Activated CD4-positive, alpha-beta memory T cell treated with anti-CD3 and anti-CD28 coated beads for 36 hours (primary cell): ENCODE measurements at regions of chr6 and their contacts with region 1.

Region 1: DNA sequence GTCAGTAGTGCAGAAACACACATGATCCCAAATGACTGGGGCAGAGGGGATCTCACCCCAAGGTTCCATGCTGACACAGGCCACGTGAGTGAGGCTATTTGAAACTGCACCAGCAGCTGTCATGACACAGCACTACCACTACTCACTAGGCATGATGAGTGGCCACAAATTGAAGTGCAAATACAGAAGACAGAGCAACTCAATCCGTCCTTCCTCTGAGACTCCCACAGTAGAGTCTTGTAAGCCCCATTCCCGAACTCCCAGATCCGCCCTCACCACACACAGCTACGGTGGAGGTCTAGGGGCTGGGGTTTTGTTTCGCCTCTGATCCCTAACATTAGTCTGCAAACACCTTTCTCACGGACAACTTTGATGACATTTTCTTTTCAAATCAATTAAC is 113.3 kb upstream of the NUP153 start:
- DNase-seq: no peak
- H3K4me3 Mint-ChIP-seq: no peak overlapping the region
- H3K27ac Mint-ChIP-seq: no peak overlapping the region
- H3K4me1 Mint-ChIP-seq: no peaks in the 10 kb centered on the region
- H3K27me3 Mint-ChIP-seq: peaks cover 2% of the 10 kb centered on the region

Region 2: GRCh38 chr6:17156112-17156921 is 663.7 kb before region 1 on chr6:
- CTCF ChIA-PET with region 1: interaction called, 12 read pairs
- POLR2A ChIA-PET with region 1: no interaction called
- intact Hi-C with region 1: loop called (anchors 2 kb)
- DNase-seq: peak; percentile 53
- H3K4me3 Mint-ChIP-seq: no peak overlapping the region
- H3K27ac Mint-ChIP-seq: no peak overlapping the region
- H3K4me1 Mint-ChIP-seq: no peaks in the 10 kb centered on the region
- H3K27me3 Mint-ChIP-seq: peaks cover 8% of the 10 kb centered on the region

Region 3: DNA sequence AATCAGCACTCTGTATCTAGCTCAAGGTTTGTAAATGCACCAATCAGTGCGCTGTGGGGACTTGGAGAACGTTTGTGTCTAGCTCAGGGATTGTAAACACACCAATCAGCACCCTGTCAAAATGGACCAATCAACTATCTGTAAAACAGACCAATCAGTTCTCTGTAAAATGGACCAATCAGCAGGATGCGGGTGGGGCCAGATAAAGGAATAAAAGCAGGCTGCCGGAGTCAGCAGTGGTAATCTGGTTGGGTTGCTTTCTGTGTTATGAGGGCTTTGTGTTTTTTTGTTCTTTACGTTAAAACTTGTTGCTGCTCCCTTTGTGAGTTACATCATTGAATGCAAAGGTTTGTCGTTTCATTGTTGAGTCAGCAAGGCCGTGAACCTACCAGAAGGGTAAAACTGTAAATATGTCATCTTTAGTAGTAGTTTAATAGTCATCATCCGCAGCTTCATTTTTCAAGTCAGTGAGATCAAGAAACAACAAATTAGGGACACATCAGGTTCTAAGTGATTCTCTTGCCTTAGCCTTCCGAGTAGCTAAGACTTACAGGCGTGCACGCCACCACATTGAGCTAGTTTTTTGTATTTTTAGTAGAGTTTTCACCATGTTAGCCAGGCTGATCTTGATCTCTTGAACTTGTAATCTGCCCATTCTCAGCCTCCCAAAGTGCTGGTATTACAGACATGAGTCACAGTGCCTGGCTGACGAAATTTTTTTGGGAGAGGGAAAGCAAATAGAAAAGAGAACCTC is 90.6 kb before region 1 on chr6:
- CTCF ChIA-PET with region 1: no interaction called
- POLR2A ChIA-PET with region 1: no interaction called
- intact Hi-C with region 1: no loop called
- DNase-seq: no peak
- H3K4me3 Mint-ChIP-seq: no peak overlapping the region
- H3K27ac Mint-ChIP-seq: no peak overlapping the region
- H3K4me1 Mint-ChIP-seq: no peaks in the 10 kb centered on the region
- H3K27me3 Mint-ChIP-seq: no peaks in the 10 kb centered on the region

Region 4: DNA sequence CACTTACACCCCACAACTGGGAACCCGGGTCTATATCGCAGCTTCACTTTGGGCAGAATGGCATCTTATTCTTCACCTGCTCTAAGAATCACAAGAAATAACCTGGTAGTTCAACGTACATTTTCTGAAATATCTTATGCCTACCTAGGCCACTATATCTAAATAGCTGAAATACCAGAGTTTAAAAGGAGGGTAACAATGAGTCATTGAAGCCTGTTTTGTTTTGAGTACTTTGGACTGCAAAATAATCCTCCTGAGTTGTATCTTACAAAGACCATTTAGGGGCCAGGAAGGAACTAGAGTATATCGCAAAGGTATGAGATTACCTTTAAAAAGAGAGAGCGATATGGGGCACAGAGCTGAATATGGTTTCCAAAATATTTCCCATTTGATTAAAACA is 16.6 kb before region 1 on chr6:
- CTCF ChIA-PET with region 1: interaction called, 26 read pairs
- POLR2A ChIA-PET with region 1: interaction called, 3 read pairs
- intact Hi-C with region 1: no loop called
- DNase-seq: no peak
- H3K4me3 Mint-ChIP-seq: no peak overlapping the region
- H3K27ac Mint-ChIP-seq: no peak overlapping the region
- H3K4me1 Mint-ChIP-seq: no peaks in the 10 kb centered on the region
- H3K27me3 Mint-ChIP-seq: peaks cover 8% of the 10 kb centered on the region

Region 5: DNA sequence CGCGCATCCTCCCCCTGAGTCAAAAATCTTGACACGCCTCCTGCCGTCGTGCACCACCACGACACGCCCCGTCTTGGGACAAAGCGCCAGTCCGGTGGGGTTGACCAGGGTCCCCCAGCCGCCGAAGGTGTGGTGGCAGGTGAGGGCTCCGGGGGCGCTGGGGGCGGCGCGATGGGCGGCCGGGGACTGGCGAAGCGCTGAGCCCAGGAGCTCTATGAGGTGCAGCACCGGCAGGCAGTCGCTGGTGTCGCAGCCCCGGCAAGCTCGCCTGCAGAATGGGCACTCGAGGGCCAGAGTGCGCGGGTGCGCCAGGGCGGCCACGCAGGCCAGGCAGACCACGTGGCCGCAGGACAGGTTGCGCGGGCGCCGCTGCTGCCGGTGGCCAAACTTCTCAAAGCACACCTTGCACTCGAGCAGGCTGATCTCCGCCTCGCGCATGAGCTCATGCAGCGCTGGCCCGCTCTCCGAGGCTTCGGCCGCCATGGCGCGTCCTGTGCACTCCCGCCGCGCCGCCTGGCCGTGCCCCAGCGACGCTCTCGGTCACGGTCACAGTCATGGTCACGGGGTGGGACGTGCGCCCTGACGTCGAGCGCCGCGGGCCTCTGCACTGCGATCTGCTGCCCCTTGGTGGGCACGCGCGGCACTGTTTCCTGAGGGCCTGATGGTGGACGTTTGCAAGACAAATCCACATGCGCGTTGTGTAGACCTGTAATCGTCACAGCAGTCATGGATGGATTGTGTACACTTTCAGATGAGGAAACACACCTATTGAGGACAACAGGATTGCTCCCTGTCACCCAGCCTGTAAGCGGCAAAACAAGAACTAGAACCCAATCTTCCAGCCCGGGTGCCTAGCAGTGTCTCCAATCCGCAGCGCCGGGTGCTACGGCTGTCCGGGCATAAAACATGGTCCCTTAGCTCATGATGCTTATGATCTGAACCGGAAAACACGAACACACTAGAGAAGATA is 302.4 kb after region 1 on chr6 and contains the start of gene NHLRC1:
- CTCF ChIA-PET with region 1: no interaction called
- POLR2A ChIA-PET with region 1: no interaction called
- intact Hi-C with region 1: loop called (anchors 5 kb)
- DNase-seq: peak; percentile 87
- H3K4me3 Mint-ChIP-seq: peak within 1 kb of the TSS; percentile 57
- H3K27ac Mint-ChIP-seq: no peak within 1 kb of the TSS
- H3K4me1 Mint-ChIP-seq: peaks cover 13% of the 10 kb centered on the region
- H3K27me3 Mint-ChIP-seq: peaks cover 24% of the 10 kb centered on the region
- total RNA-seq, gene NHLRC1: 0.10 to 0.19 TPM

Region 6: GRCh38 chr6:18179770-18180356 is 359.8 kb after region 1 on chr6:
- CTCF ChIA-PET with region 1: no interaction called
- POLR2A ChIA-PET with region 1: no interaction called
- intact Hi-C with region 1: no loop called
- DNase-seq: no peak
- H3K4me3 Mint-ChIP-seq: no peak overlapping the region
- H3K27ac Mint-ChIP-seq: no peak overlapping the region
- H3K4me1 Mint-ChIP-seq: no peaks in the 10 kb centered on the region
- H3K27me3 Mint-ChIP-seq: no peaks in the 10 kb centered on the region